ENCODE measurements at regions of chr12 and their contacts with region 1.

Region 1: DNA sequence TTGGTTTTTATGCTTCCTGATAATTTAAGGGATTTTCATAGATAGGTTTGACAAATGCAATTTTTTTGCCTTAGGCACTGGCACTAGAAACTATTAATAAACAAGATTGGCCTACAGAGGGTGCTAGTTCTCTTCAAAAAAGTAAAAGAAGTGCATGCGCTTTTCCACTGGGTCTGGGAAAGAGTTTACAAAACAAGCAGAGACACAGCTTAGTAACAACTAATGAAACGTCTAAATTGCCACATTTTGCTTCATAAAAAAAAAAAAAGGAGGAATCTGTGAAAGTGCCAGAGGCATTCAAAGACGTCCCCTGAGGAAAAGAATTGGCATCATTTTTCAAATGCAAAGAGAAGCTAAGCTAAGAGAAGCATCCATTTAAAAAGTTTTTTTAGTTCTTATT is 58.3 kb upstream of the EEA1 start:
- DNase-seq: peak; percentile 58
- H3K4me3 ChIP-seq: no peak overlapping the region
- H3K27ac ChIP-seq: peak overlapping the region in 1 of 2 donors; percentile 14
- H3K4me1 ChIP-seq: no peaks in the 10 kb centered on the region
- H3K27me3 ChIP-seq: no peaks in the 10 kb centered on the region
- CTCF ChIP-seq: peak; percentile 27 to 92 (median 76)
- POLR2A ChIP-seq: no peak

Region 2: GRCh38 chr12:93397412-93397811 is 410.1 kb after region 1 on chr12:
- intact Hi-C with region 1: loop called (anchors 5 kb)
- DNase-seq: no peak
- H3K4me3 ChIP-seq: no peak overlapping the region
- H3K27ac ChIP-seq: peak overlapping the region in 1 of 2 donors; percentile 20
- H3K4me1 ChIP-seq: no peaks in the 10 kb centered on the region
- H3K27me3 ChIP-seq: no peaks in the 10 kb centered on the region
- CTCF ChIP-seq: no peak
- POLR2A ChIP-seq: no peak

Region 3: GRCh38 chr12:93419388-93420034 is 432.1 kb after region 1 on chr12:
- intact Hi-C with region 1: loop called (anchors 5 kb)
- DNase-seq: no peak
- H3K4me3 ChIP-seq: no peak overlapping the region
- H3K27ac ChIP-seq: peak overlapping the region in 1 of 2 donors; percentile 18
- H3K4me1 ChIP-seq: no peaks in the 10 kb centered on the region
- H3K27me3 ChIP-seq: no peaks in the 10 kb centered on the region
- CTCF ChIP-seq: peak; percentile 44 to 82 (median 79)
- POLR2A ChIP-seq: no peak

Measured in prostate gland (tissue), 2 donors.